Panc1 (cell line): ENCODE measurements at regions of chr12 and their contacts with region 1.

Region 1: GRCh38 chr12:131699434-131699833 is 11.5 kb upstream of the SFSWAP start:
- DNase-seq: no peak
- ATAC-seq: no peak
- H3K4me3 ChIP-seq: no peak overlapping the region
- H3K27ac ChIP-seq: no peak overlapping the region
- H3K4me1 ChIP-seq: no peaks in the 10 kb centered on the region
- H3K27me3 ChIP-seq: no peaks in the 10 kb centered on the region
- CTCF ChIP-seq: no peak

Region 2: DNA sequence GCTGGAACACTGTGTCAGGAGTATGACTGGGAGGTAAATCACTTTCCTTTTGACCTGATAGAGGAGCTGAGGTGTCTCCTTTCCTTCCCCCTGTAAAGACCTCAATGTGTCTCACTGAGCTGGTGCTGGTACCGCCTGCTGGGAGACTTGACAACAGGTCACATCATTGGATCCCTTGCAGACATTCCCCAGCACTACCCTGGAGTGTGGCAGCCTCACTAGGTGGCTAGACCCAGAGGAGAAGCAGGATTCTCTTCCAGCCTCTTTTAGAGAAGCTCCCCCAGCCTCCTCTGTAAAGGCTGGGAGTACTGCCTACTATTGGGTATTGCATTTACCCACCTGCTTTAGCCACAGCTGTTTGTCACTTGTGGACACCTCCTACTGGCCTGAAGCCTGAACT is 521.8 kb before region 1 on chr12:
- CTCF ChIA-PET with region 1: no interaction called
- POLR2A ChIA-PET with region 1: interaction called, 11 read pairs
- in situ Hi-C with region 1: no loop called
- intact Hi-C with region 1: no loop called
- DNase-seq: no peak
- ATAC-seq: no peak
- H3K4me3 ChIP-seq: no peak overlapping the region
- H3K27ac ChIP-seq: no peak overlapping the region
- H3K4me1 ChIP-seq: no peaks in the 10 kb centered on the region
- H3K27me3 ChIP-seq: peaks cover 5% of the 10 kb centered on the region; the same call in 1 of the 2 replicates
- CTCF ChIP-seq: no peak